Activated CD8-positive, alpha-beta memory T cell treated with anti-CD3 and anti-CD28 coated beads, Interleukin-2, amount 10 ng/mL, durations not matched to agents 7 days and 5 days (primary cell): ENCODE measurements at regions of chr17 and their contacts with region 1.

Region 1: GRCh38 chr17:5065227-5065744 is 13.0 kb upstream of the ZFP3 start:
- DNase-seq: no peak
- ATAC-seq: no peak
- H3K4me3 Mint-ChIP-seq: no peak overlapping the region
- H3K27ac Mint-ChIP-seq: no peak overlapping the region
- H3K4me1 Mint-ChIP-seq: peaks cover 5% of the 10 kb centered on the region
- H3K27me3 Mint-ChIP-seq: no peaks in the 10 kb centered on the region

Region 2: DNA sequence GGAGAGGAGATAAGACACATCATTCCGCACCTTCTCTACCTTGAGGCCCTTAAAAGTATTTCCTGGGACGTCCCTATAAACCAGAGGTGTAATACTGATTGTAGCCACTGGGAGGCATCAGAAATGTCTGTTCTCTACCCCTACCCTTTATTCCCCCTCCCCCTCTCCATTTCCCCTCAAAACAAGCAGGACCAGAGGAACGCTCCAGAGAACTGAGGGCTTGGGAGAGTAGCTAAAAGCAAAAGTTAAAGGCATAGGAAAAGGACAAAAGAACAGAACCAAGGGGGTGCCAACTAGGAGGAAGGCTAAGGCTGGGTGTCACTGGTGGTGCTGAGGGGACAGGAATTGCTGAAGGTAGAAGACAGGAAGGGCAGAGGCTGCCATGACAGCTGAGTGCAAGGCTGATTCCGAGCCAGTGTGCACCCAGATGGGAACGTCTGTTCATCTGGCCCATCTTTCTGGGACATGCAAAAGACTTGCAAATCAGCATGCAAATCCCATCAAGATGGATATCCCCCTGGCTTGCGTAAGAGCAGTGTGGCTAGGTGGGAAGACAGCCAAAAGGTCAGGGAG is 84.6 kb before region 1 on chr17:
- CTCF ChIA-PET with region 1: interaction called, 11 read pairs
- DNase-seq: peak; percentile 56
- ATAC-seq: peak; percentile 85
- H3K4me3 Mint-ChIP-seq: no peak overlapping the region
- H3K27ac Mint-ChIP-seq: peak overlapping the region; percentile 61
- H3K4me1 Mint-ChIP-seq: peaks cover 19% of the 10 kb centered on the region
- H3K27me3 Mint-ChIP-seq: no peaks in the 10 kb centered on the region

Region 3: GRCh38 chr17:5097101-5097834 is 32.0 kb after region 1 on chr17:
- CTCF ChIA-PET with region 1: no interaction called
- DNase-seq: no peak
- ATAC-seq: no peak
- H3K4me3 Mint-ChIP-seq: no peak overlapping the region
- H3K27ac Mint-ChIP-seq: peak overlapping the region; percentile 13
- H3K4me1 Mint-ChIP-seq: no peaks in the 10 kb centered on the region
- H3K27me3 Mint-ChIP-seq: peaks cover 15% of the 10 kb centered on the region